ENCODE measurements at regions of chr14 and their contacts with region 1.

Region 1: DNA sequence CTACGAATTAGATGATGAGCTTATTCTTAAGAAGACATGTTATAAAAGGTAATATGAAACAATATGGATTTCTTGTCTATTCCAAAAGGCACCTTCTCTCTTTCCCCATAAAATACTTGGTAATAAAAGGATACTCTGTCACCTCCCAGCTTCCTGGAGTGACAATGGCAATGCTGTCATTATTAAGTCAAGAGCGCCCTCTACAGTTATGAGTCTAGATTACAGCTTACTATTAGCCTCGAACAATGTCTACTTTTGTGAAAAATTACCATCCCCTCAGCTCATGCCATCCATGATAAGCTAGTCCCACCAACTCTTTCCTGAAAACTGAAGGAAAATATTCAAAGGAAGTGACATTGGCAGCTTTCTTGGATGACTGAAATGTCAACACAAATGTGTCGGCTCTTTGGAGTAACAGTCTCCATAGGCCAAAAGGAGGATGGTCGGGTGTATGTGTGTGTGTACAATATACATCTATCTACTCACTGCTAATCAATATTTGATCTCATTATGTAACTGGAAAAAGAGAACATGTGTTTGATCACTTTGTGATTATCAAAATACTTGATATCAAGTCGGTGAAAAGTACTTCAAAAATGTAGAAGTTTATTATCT is 48.7 kb upstream of the CDKN3 start:
- DNase-seq: peak; percentile 44
- ATAC-seq: peak; percentile 89
- H3K4me3 ChIP-seq: no peak overlapping the region
- H3K27ac ChIP-seq: no peak overlapping the region
- H3K4me1 ChIP-seq: peaks cover 4 to 14% of the 10 kb centered on the region in 2 experiments; a peak in 2 of 4 replicates
- H3K27me3 ChIP-seq: no peaks in the 10 kb centered on the region
- CTCF ChIP-seq: peak; percentile 51 to 90 (median 81)
- POLR2A ChIP-seq: no peak
- RAD21 ChIP-seq: peak; percentile 89

Region 2: GRCh38 chr14:53295985-53296582 is 1052.0 kb before region 1 on chr14:
- CTCF ChIA-PET with region 1: interaction called, 16 read pairs
- POLR2A ChIA-PET with region 1: no interaction called
- RAD21 ChIA-PET with region 1: no interaction called
- intact Hi-C with region 1: loop called (anchors 5 kb)
- DNase-seq: peak; percentile 23
- ATAC-seq: peak; percentile 46
- H3K4me3 ChIP-seq: no peak overlapping the region
- H3K27ac ChIP-seq: no peak overlapping the region
- H3K4me1 ChIP-seq: no peaks in the 10 kb centered on the region
- H3K27me3 ChIP-seq: no peaks in the 10 kb centered on the region
- CTCF ChIP-seq: peak; percentile 39 to 78 (median 40); a peak in 5 of 6 replicates
- POLR2A ChIP-seq: no peak
- RAD21 ChIP-seq: peak; percentile 42

Region 3: GRCh38 chr14:53412803-53413675 is 935.1 kb before region 1 on chr14:
- CTCF ChIA-PET with region 1: interaction called, 11 read pairs
- POLR2A ChIA-PET with region 1: no interaction called
- RAD21 ChIA-PET with region 1: no interaction called
- intact Hi-C with region 1: loop called (anchors 5 kb)
- DNase-seq: no peak
- ATAC-seq: peak; percentile 91
- H3K4me3 ChIP-seq: no peak overlapping the region
- H3K27ac ChIP-seq: no peak overlapping the region
- H3K4me1 ChIP-seq: peaks cover 7 to 20% of the 10 kb centered on the region in 2 experiments
- H3K27me3 ChIP-seq: no peaks in the 10 kb centered on the region
- CTCF ChIP-seq: peak in 2 of 3 experiments; percentile 63 to 66; a peak in 4 of 6 replicates
- POLR2A ChIP-seq: no peak
- RAD21 ChIP-seq: peak; percentile 40; the same call in 1 of the 2 replicates

Region 4: DNA sequence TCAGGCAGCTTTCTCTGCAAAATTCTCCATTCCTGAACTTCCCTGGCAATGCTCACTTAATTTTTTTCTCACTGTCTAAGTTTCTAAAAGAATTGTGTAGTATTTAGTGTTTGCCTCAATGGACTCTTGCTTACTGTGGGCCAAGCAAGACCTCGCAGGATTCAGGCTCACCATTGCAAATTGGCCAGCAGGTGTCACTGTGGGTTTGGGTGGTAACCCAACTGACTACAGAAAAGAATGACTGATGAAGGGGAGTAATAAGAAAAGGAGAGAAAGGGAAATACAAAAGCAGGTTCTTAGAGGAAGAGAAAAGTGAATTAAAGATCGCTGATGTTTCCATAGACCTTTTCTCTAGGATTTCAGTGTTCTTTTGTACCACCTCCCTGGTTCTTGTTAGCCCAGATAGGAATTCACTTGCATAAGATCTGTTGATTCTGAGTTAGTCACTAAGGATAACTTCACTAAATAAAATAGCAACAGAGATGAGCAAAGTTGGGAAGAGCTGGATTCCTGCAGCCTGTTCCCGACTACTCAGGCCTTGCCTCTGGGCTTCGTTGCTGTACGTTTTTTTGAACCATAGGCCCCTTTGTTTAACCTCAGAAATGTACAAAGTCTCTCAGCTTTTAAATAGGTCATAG is 808.5 kb before region 1 on chr14:
- CTCF ChIA-PET with region 1: interaction called, 17 read pairs
- POLR2A ChIA-PET with region 1: interaction called, 4 read pairs
- RAD21 ChIA-PET with region 1: interaction called, 3 to 5 read pairs
- intact Hi-C with region 1: no loop called
- DNase-seq: peak; percentile 71
- ATAC-seq: peak; percentile 95
- H3K4me3 ChIP-seq: no peak overlapping the region
- H3K27ac ChIP-seq: peak overlapping the region; percentile 34; the same call in 1 of the 2 replicates
- H3K4me1 ChIP-seq: peaks cover 14 to 23% of the 10 kb centered on the region in 2 experiments; a peak in 3 of 4 replicates
- H3K27me3 ChIP-seq: no peaks in the 10 kb centered on the region
- CTCF ChIP-seq: peak; percentile 73 to 96 (median 85)
- POLR2A ChIP-seq: no peak
- RAD21 ChIP-seq: peak; percentile 93

Region 5: GRCh38 chr14:54253195-54253947 is 94.7 kb before region 1 on chr14:
- CTCF ChIA-PET with region 1: no interaction called
- POLR2A ChIA-PET with region 1: no interaction called
- RAD21 ChIA-PET with region 1: no interaction called
- intact Hi-C with region 1: no loop called
- DNase-seq: peak; percentile 91
- ATAC-seq: peak; percentile 67
- H3K4me3 ChIP-seq: peak overlapping the region in 1 of 2 experiments; percentile 43; a peak in 2 of 4 replicates
- H3K27ac ChIP-seq: peak overlapping the region; percentile 86
- H3K4me1 ChIP-seq: peaks cover 37 to 54% of the 10 kb centered on the region in 2 experiments
- H3K27me3 ChIP-seq: no peaks in the 10 kb centered on the region; the same call in 1 of the 2 replicates
- CTCF ChIP-seq: no peak
- POLR2A ChIP-seq: no peak
- RAD21 ChIP-seq: peak; percentile 36; the same call in 1 of the 2 replicates

Region 6: GRCh38 chr14:54329082-54329695 is 18.9 kb before region 1 on chr14:
- CTCF ChIA-PET with region 1: interaction called, 11 read pairs
- POLR2A ChIA-PET with region 1: no interaction called
- RAD21 ChIA-PET with region 1: interaction called in 1 of 2 experiments, 3 read pairs
- intact Hi-C with region 1: no loop called
- DNase-seq: peak; percentile 29
- ATAC-seq: peak; percentile 94
- H3K4me3 ChIP-seq: no peak overlapping the region
- H3K27ac ChIP-seq: 0 out of 2 replicates have a peak overlapping the region, but pooled peaks have one; percentile 8
- H3K4me1 ChIP-seq: peaks cover 0 to 8% of the 10 kb centered on the region in 2 experiments; a peak in 2 of 4 replicates
- H3K27me3 ChIP-seq: no peaks in the 10 kb centered on the region
- CTCF ChIP-seq: peak; percentile 40 to 60 (median 60); a peak in 5 of 6 replicates
- POLR2A ChIP-seq: no peak
- RAD21 ChIP-seq: peak; percentile 77

Region 7: GRCh38 chr14:54411371-54411770 is 63.3 kb after region 1 on chr14:
- CTCF ChIA-PET with region 1: no interaction called
- POLR2A ChIA-PET with region 1: no interaction called
- RAD21 ChIA-PET with region 1: no interaction called
- intact Hi-C with region 1: no loop called
- DNase-seq: no peak
- ATAC-seq: no peak
- H3K4me3 ChIP-seq: no peak overlapping the region
- H3K27ac ChIP-seq: no peak overlapping the region
- H3K4me1 ChIP-seq: no peaks in the 10 kb centered on the region
- H3K27me3 ChIP-seq: no peaks in the 10 kb centered on the region
- CTCF ChIP-seq: no peak
- POLR2A ChIP-seq: no peak
- RAD21 ChIP-seq: no peak